Naive thymus-derived CD4-positive, alpha-beta T cell (primary cell): ENCODE measurements at regions of chr4 and their contacts with region 1.

Region 1: GRCh38 chr4:148495471-148495870 is 53.3 kb upstream of the NR3C2 start:
- DNase-seq: no peak
- ATAC-seq: no peak
- H3K4me3 ChIP-seq: no peak overlapping the region
- H3K4me3 Mint-ChIP-seq: no peak overlapping the region
- H3K27ac ChIP-seq: no peak overlapping the region
- H3K27ac Mint-ChIP-seq: no peak overlapping the region
- H3K4me1 ChIP-seq: no peaks in the 10 kb centered on the region
- H3K4me1 Mint-ChIP-seq: peaks cover 0 to 1% (median 0%) of the 10 kb centered on the region in 7 donors
- H3K27me3 ChIP-seq: no peaks in the 10 kb centered on the region
- H3K27me3 Mint-ChIP-seq: no peaks in the 10 kb centered on the region

Region 2: GRCh38 chr4:148454835-148455234 is 40.6 kb before region 1 on chr4:
- CTCF ChIA-PET with region 1: no interaction called
- POLR2A ChIA-PET with region 1: no interaction called
- intact Hi-C with region 1: loop called in 1 of 2 experiments (anchors 5 kb)
- DNase-seq: no peak
- ATAC-seq: no peak
- H3K4me3 ChIP-seq: no peak overlapping the region
- H3K4me3 Mint-ChIP-seq: no peak overlapping the region
- H3K27ac ChIP-seq: no peak overlapping the region
- H3K27ac Mint-ChIP-seq: no peak overlapping the region
- H3K4me1 ChIP-seq: no peaks in the 10 kb centered on the region
- H3K4me1 Mint-ChIP-seq: peaks cover 0 to 7% (median 2%) of the 10 kb centered on the region in 7 donors
- H3K27me3 ChIP-seq: no peaks in the 10 kb centered on the region
- H3K27me3 Mint-ChIP-seq: peaks cover 0 to 4% (median 0%) of the 10 kb centered on the region in 5 donors